ENCODE measurements at regions of chr11 and their contacts with region 1.

Region 1: DNA sequence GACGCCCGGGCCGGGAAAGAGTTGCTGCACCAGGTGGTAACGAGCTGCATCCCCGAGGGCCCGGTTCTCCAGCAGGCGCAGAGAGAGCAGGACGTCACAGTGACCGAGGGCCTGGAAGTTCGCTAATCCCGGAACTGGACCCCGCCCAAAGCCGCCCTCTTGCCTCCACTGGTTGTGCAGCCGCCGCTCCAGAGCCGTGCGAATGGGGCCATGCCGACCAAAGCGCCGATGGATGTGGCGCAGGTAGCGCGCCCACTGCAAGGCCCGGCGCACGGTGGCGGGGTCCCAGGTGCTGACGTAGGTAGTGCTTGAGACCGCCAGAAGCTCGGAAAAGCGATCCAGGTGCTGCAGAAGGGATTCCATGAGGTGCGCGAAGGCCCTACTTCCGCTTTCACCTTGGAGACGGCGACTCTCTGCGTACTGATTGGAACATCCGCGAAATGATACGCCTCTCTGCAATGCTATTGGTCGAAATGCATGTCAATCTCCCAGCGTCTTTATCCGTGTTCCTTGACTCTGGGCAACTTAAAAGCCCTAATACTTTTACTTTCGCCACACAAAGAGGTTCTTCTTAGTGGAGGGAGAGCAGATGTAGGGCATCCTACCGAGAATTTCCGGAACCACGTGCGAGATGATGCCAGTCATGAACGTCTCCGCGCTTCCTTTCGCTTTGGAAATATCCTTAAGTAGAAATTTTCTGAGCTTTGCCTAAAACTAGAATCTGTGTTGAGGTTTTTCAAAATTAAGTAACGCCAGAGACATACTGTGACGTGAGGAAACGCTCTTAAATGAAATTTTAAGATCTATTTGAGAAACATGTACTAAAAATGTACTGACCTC is at the start of gene FANCF:
- DNase-seq: peak; percentile 91 to 96 (median 95)
- ATAC-seq: peak; percentile 98 to 99 (median 99)
- H3K4me3 ChIP-seq: peak within 1 kb of the TSS; percentile 59 to 95 (median 80)
- H3K27ac ChIP-seq: peak within 1 kb of the TSS; percentile 59 to 97 (median 89)
- H3K4me1 ChIP-seq: peaks cover 0 to 19% (median 12%) of the 10 kb centered on the region in 12 donors
- H3K27me3 ChIP-seq: no peaks in the 10 kb centered on the region
- CTCF ChIP-seq: no peak
- POLR2A ChIP-seq: peak in 1 of 2 donors; percentile 49
- total RNA-seq, gene FANCF: 4.6 to 8.6 (median 6.2) TPM

Region 2: DNA sequence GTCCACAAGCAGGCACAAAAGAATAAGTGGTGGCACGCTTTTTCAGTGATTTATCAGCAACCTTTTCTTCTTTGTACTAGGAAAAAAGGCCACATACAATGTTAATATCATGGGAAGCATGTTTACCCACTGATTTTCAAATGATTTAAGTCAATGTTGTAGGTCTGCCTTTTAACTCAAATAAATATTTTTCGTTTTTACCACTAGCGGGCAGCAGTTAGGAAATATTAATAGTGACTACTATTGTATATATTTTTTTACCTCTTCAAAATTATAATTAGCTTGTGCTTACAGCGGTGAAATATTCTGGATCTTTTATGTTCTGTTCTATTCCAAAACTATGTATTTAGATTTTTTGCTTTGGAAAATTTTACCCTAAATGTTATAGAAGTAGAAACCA is 293.9 kb before region 1 on chr11:
- intact Hi-C with region 1: loop called in 1 of 10 experiments (anchors 5 kb)
- DNase-seq: no peak
- ATAC-seq: no peak
- H3K4me3 ChIP-seq: no peak overlapping the region
- H3K27ac ChIP-seq: no peak overlapping the region
- H3K4me1 ChIP-seq: no peaks in the 10 kb centered on the region
- H3K27me3 ChIP-seq: peaks cover 0 to 19% (median 2%) of the 10 kb centered on the region in 9 donors
- CTCF ChIP-seq: peak in 1 of 12 donors; percentile 10
- POLR2A ChIP-seq: no peak

Region 3: DNA sequence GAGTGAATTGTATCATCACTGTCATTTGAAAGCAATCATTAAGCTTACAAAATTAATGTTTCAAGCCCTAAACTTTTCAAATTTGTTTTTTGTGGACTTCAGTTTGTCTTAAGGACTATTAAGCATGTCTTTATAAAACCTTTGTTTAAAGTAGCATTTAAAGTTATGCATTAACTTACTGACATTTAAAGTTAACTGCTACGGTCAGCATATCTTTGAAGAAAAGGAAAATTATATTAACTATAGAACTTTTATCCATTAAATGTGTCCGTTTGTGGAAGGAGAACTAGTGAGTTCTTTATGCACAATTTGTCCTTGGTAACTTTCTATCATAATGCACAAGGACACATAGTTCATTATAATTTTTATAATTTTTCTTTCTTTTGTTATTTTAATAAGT is 103.4 kb before region 1 on chr11:
- intact Hi-C with region 1: no loop called
- DNase-seq: no peak
- ATAC-seq: no peak
- H3K4me3 ChIP-seq: no peak overlapping the region
- H3K27ac ChIP-seq: no peak overlapping the region
- H3K4me1 ChIP-seq: no peaks in the 10 kb centered on the region
- H3K27me3 ChIP-seq: no peaks in the 10 kb centered on the region
- CTCF ChIP-seq: no peak
- POLR2A ChIP-seq: no peak

Region 4: GRCh38 chr11:22567759-22568158 is 57.9 kb before region 1 on chr11:
- intact Hi-C with region 1: no loop called
- DNase-seq: no peak
- ATAC-seq: no peak
- H3K4me3 ChIP-seq: no peak overlapping the region
- H3K27ac ChIP-seq: no peak overlapping the region
- H3K4me1 ChIP-seq: no peaks in the 10 kb centered on the region
- H3K27me3 ChIP-seq: no peaks in the 10 kb centered on the region
- CTCF ChIP-seq: no peak
- POLR2A ChIP-seq: no peak

Region 5: GRCh38 chr11:22666688-22667439 is 41.2 kb after region 1 on chr11:
- intact Hi-C with region 1: loop called in 1 of 10 experiments (anchors 5 kb)
- DNase-seq: peak; percentile 49 to 79 (median 76)
- ATAC-seq: peak; percentile 68 to 95 (median 88)
- H3K4me3 ChIP-seq: peak overlapping the region; percentile 32 to 66 (median 58)
- H3K27ac ChIP-seq: peak overlapping the region; percentile 63 to 91 (median 79)
- H3K4me1 ChIP-seq: peaks cover 0 to 12% (median 0%) of the 10 kb centered on the region in 12 donors
- H3K27me3 ChIP-seq: peaks cover 0 to 32% (median 0%) of the 10 kb centered on the region in 9 donors
- CTCF ChIP-seq: peak in 4 of 12 donors; percentile 14 to 29 (median 19)
- POLR2A ChIP-seq: no peak

Region 6: GRCh38 chr11:22809893-22810292 is 184.2 kb after region 1 on chr11:
- intact Hi-C with region 1: no loop called
- DNase-seq: no peak
- ATAC-seq: no peak
- H3K4me3 ChIP-seq: no peak overlapping the region
- H3K27ac ChIP-seq: no peak overlapping the region
- H3K4me1 ChIP-seq: peaks cover 0 to 25% (median 17%) of the 10 kb centered on the region in 12 donors
- H3K27me3 ChIP-seq: no peaks in the 10 kb centered on the region
- CTCF ChIP-seq: no peak
- POLR2A ChIP-seq: no peak

Region 7: GRCh38 chr11:22829231-22830081 is 203.8 kb after region 1 on chr11 and contains the start of gene SVIP:
- intact Hi-C with region 1: loop called in 2 of 10 experiments (anchors 5 to 10 kb)
- DNase-seq: peak; percentile 95 to 97 (median 96)
- ATAC-seq: peak; percentile 95 to 100 (median 98)
- H3K4me3 ChIP-seq: peak within 1 kb of the TSS; percentile 73 to 96 (median 88)
- H3K27ac ChIP-seq: peak within 1 kb of the TSS; percentile 51 to 92 (median 86)
- H3K4me1 ChIP-seq: peaks cover 0 to 18% (median 8%) of the 10 kb centered on the region in 12 donors
- H3K27me3 ChIP-seq: no peaks in the 10 kb centered on the region
- CTCF ChIP-seq: peak; percentile 44 to 80 (median 67)
- POLR2A ChIP-seq: peak in 1 of 2 donors; percentile 66
- total RNA-seq, gene SVIP: 7.9 to 33.9 (median 23.4) TPM